ENCODE measurements at regions of chr2 and their contacts with region 1.

Region 1: GRCh38 chr2:46943881-46944798 is 28.5 kb upstream of the MCFD2 start:
- DNase-seq: peak in 34 of 35 experiments; percentile 31 to 88 (median 64)
- ATAC-seq: peak; percentile 30 to 75 (median 37)
- H3K4me3 ChIP-seq: peak overlapping the region in 1 of 2 donors; percentile 69
- H3K4me3 Mint-ChIP-seq: peak overlapping the region; percentile 98 to 99 (median 99)
- H3K27ac ChIP-seq: peak overlapping the region; percentile 99
- H3K27ac Mint-ChIP-seq: peak overlapping the region; percentile 94 to 98
- H3K4me1 ChIP-seq: peaks cover 40 to 76% of the 10 kb centered on the region in 2 experiments
- H3K4me1 Mint-ChIP-seq: peaks cover 68 to 76% (median 73%) of the 10 kb centered on the region in 3 donors
- H3K27me3 ChIP-seq: no peaks in the 10 kb centered on the region
- H3K27me3 Mint-ChIP-seq: no peaks in the 10 kb centered on the region

Region 2: DNA sequence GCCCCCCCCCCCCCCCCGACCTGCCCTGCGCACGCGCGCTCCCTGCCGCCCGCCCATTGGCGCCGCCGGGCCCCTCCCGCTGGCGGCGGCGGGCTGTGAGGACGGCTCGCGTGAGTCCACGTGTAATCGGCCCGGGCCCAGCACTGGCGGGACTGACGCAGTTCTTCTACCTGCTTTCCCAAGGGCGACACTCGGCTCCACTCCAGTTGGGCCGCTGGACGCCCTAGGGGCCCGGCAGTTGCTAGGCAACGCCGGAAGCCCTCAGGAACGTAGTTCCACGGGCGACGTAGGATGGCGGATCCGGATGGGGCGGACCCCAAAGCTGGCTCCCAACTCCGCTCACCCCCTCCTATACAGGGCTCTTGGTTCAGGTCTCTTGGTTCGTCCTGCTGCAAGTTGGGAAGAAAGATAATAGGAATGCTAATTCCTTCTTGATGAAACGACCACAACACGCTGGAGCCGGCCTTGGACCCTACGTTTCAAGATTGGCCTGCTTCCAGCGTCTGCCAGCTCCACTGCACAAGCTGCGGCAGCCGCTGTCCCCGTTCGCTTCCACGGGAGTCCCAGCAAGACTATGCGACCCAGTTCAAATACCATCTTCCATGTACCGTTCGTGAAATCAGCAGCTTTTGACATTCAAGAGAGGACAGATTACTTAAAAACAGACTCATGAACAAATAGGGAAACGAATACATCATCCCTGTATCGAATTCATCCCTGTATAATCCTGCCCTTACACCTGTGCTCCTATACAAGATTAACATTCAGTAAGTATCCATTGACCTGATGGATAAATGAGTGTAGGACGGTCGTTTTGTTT is 28.1 kb before region 1 on chr2:
- CTCF ChIA-PET with region 1: interaction called, 3 to 6 read pairs
- POLR2A ChIA-PET with region 1: interaction called in 1 of 2 experiments, 14 read pairs
- DNase-seq: peak; percentile 66 to 87 (median 75)
- ATAC-seq: peak; percentile 90 to 92 (median 91)
- H3K4me3 ChIP-seq: peak overlapping the region; percentile 93 to 99
- H3K4me3 Mint-ChIP-seq: peak overlapping the region; percentile 90 to 97 (median 90)
- H3K27ac ChIP-seq: peak overlapping the region; percentile 74
- H3K27ac Mint-ChIP-seq: peak overlapping the region; percentile 58 to 85
- H3K4me1 ChIP-seq: peaks cover 32 to 41% of the 10 kb centered on the region in 2 experiments
- H3K4me1 Mint-ChIP-seq: peaks cover 45 to 60% (median 57%) of the 10 kb centered on the region in 3 donors
- H3K27me3 ChIP-seq: no peaks in the 10 kb centered on the region
- H3K27me3 Mint-ChIP-seq: no peaks in the 10 kb centered on the region

Region 3: DNA sequence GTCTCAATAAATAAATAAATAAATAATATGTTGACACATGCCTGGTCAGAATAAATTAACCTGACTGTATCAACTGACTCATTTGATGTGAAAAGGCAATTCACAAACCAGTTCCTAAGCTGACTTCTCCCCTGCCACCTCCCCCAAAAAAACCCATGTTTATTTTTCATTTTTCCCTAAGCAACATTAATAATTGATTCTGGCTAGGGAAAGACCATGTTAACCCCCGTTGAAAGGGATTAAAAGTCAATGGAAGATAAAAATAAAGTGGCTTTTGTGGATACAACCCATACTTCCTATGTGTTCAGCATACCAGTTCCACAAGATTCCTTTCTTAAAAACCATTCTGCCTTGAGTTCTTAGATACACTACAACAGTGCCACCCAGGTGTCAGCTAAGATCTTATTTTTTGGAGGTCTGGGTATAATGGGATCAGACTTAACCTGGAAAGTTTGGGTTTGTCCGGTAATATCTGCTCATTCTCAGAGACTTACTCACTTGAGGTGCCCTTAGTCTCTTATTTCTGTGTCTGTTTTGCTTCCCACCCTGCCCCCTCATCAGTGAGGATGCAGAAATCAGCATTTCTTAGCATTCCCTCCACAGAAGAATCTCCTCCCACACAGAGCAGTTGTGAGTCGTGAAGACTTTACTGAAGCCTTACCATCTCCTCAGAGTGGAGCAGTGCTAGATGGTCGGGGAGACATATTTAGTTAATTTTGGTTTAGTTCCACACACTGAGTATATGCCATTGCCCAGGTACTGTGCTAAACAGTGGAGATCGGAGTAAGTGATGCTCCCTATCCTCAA is 18.4 kb before region 1 on chr2:
- CTCF ChIA-PET with region 1: interaction called, 3 read pairs
- POLR2A ChIA-PET with region 1: interaction called, 4 to 11 read pairs
- DNase-seq: no peak
- ATAC-seq: no peak
- H3K4me3 ChIP-seq: no peak overlapping the region
- H3K4me3 Mint-ChIP-seq: no peak overlapping the region
- H3K27ac ChIP-seq: no peak overlapping the region
- H3K27ac Mint-ChIP-seq: no peak overlapping the region
- H3K4me1 ChIP-seq: peaks cover 14 to 17% of the 10 kb centered on the region in 2 experiments
- H3K4me1 Mint-ChIP-seq: peaks cover 18 to 21% (median 21%) of the 10 kb centered on the region in 3 donors
- H3K27me3 ChIP-seq: no peaks in the 10 kb centered on the region
- H3K27me3 Mint-ChIP-seq: no peaks in the 10 kb centered on the region

Region 4: GRCh38 chr2:47119001-47119400 is 174.9 kb after region 1 on chr2:
- CTCF ChIA-PET with region 1: no interaction called
- POLR2A ChIA-PET with region 1: interaction called in 1 of 2 experiments, 10 read pairs
- DNase-seq: no peak
- ATAC-seq: no peak
- H3K4me3 ChIP-seq: no peak overlapping the region
- H3K4me3 Mint-ChIP-seq: no peak overlapping the region
- H3K27ac ChIP-seq: no peak overlapping the region
- H3K27ac Mint-ChIP-seq: no peak overlapping the region
- H3K4me1 ChIP-seq: no peaks in the 10 kb centered on the region
- H3K4me1 Mint-ChIP-seq: no peaks in the 10 kb centered on the region
- H3K27me3 ChIP-seq: peaks cover 0 to 2% of the 10 kb centered on the region in 2 experiments
- H3K27me3 Mint-ChIP-seq: peaks cover 0 to 3% of the 10 kb centered on the region in 2 donors

Measured in T-cell (primary cell).